PC-3 (cell line): ENCODE measurements at regions of chr7 and their contacts with region 1.

Region 1: GRCh38 chr7:103447073-103447951 is 1.3 kb upstream of the SLC26A5 start:
- DNase-seq: peak; percentile 75
- ATAC-seq: peak; percentile 66
- H3K4me3 ChIP-seq: peak overlapping the region; percentile 71
- H3K27ac ChIP-seq: no peak overlapping the region
- H3K4me1 ChIP-seq: peaks cover 17% of the 10 kb centered on the region
- H3K27me3 ChIP-seq: no peaks in the 10 kb centered on the region
- CTCF ChIP-seq: peak; percentile 90

Region 2: DNA sequence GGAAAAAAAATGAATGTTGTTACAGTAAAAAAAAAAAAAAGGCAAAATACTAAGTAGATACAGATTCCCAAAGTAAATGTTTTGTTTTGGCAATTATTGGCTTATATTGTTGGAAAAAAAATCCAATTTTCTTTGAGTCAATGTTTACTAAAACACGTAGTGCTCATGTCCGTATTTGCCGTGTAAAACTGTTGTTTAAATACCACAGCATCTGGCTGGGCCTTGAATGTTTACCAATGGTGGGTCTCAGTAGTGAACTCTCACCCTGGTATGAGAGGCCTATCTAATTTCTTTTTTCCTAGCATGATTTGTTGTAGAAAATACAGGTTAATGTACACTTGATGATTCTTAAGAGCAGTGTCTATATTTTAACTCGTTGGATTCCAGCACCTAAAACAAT is 40.1 kb after region 1 on chr7:
- CTCF ChIA-PET with region 1: no interaction called
- POLR2A ChIA-PET with region 1: no interaction called
- intact Hi-C with region 1: loop called (anchors 1 kb)
- DNase-seq: peak; percentile 85
- ATAC-seq: peak; percentile 99
- H3K4me3 ChIP-seq: no peak overlapping the region
- H3K27ac ChIP-seq: peak overlapping the region; percentile 65
- H3K4me1 ChIP-seq: peaks cover 11% of the 10 kb centered on the region
- H3K27me3 ChIP-seq: no peaks in the 10 kb centered on the region
- CTCF ChIP-seq: no peak

Region 3: GRCh38 chr7:103573479-103574058 is 126.3 kb after region 1 on chr7:
- CTCF ChIA-PET with region 1: interaction called, 5 read pairs
- POLR2A ChIA-PET with region 1: no interaction called
- intact Hi-C with region 1: loop called (anchors 1 kb)
- DNase-seq: peak; percentile 78
- ATAC-seq: no peak; the same call in none of the 2 replicates
- H3K4me3 ChIP-seq: no peak overlapping the region
- H3K27ac ChIP-seq: no peak overlapping the region
- H3K4me1 ChIP-seq: no peaks in the 10 kb centered on the region
- H3K27me3 ChIP-seq: no peaks in the 10 kb centered on the region
- CTCF ChIP-seq: peak; percentile 80

Region 4: DNA sequence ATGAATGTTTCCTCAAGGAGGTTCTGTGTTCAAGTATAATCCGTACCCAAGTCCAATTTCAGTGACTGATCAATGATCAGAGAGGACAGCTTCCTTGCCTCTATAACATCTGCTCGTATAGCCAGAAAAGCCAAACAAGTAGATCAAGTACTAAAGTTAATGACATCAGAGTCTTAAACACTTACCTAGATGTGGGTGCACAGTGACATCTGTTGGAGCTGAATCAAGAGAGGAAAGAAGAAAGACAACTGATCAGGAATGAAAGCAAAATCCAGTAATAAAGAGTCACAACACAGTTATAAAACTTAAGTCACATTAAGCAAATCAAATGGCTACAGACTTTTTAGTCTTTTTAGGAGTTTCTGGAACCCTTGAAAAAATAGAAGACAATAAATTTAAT is 305.7 kb after region 1 on chr7:
- CTCF ChIA-PET with region 1: no interaction called
- POLR2A ChIA-PET with region 1: no interaction called
- intact Hi-C with region 1: loop called (anchors 1 kb)
- DNase-seq: peak; percentile 69
- ATAC-seq: peak; percentile 90
- H3K4me3 ChIP-seq: no peak overlapping the region
- H3K27ac ChIP-seq: no peak overlapping the region
- H3K4me1 ChIP-seq: peaks cover 3% of the 10 kb centered on the region; the same call in 1 of the 2 replicates
- H3K27me3 ChIP-seq: no peaks in the 10 kb centered on the region
- CTCF ChIP-seq: peak; percentile 65

Region 5: GRCh38 chr7:104045183-104045582 is 597.9 kb after region 1 on chr7:
- CTCF ChIA-PET with region 1: no interaction called
- POLR2A ChIA-PET with region 1: no interaction called
- intact Hi-C with region 1: no loop called
- DNase-seq: no peak
- ATAC-seq: no peak
- H3K4me3 ChIP-seq: no peak overlapping the region
- H3K27ac ChIP-seq: no peak overlapping the region
- H3K4me1 ChIP-seq: no peaks in the 10 kb centered on the region
- H3K27me3 ChIP-seq: peaks cover 4% of the 10 kb centered on the region; the same call in 1 of the 2 replicates
- CTCF ChIP-seq: no peak